ENCODE measurements at regions of chr3 and their contacts with region 1.

Region 1: GRCh38 chr3:153970741-153971347 is 150.3 kb upstream of the ARHGEF26 start:
- DNase-seq: peak; percentile 64
- H3K4me3 ChIP-seq: no peak overlapping the region
- H3K27ac ChIP-seq: no peak overlapping the region
- H3K4me1 ChIP-seq: no peaks in the 10 kb centered on the region
- H3K27me3 ChIP-seq: no peaks in the 10 kb centered on the region
- CTCF ChIP-seq: peak; percentile 23 to 33
- POLR2A ChIP-seq: no peak

Region 2: GRCh38 chr3:153443961-153444360 is 526.9 kb before region 1 on chr3:
- CTCF ChIA-PET with region 1: interaction called, 13 read pairs
- POLR2A ChIA-PET with region 1: no interaction called
- dilution Hi-C with region 1: no loop called
- intact Hi-C with region 1: no loop called
- DNase-seq: peak; percentile 18
- H3K4me3 ChIP-seq: no peak overlapping the region
- H3K27ac ChIP-seq: no peak overlapping the region
- H3K4me1 ChIP-seq: no peaks in the 10 kb centered on the region
- H3K27me3 ChIP-seq: no peaks in the 10 kb centered on the region
- CTCF ChIP-seq: peak; percentile 1 to 6
- POLR2A ChIP-seq: no peak

Region 3: DNA sequence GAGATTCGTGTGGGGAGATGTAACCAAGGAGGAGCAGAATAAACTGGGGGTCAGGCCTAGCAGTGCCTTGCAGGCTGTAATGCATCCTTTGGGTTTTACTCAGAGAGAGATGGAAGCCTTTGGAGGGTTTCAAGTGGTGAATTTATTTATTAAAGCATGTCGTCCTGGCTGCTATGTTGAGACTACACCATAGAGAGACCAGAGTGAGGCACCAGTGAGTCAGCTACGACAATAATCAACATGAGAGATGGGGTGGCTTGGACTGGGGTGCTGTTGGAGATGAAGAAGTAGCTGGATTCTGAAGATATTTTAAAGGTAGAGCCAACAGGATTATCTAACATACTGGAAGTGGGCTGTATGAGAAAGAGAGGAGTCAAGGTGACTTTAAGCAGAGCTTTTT is 184.9 kb before region 1 on chr3:
- CTCF ChIA-PET with region 1: interaction called, 23 read pairs
- POLR2A ChIA-PET with region 1: no interaction called
- dilution Hi-C with region 1: no loop called
- intact Hi-C with region 1: no loop called
- DNase-seq: no peak
- H3K4me3 ChIP-seq: no peak overlapping the region
- H3K27ac ChIP-seq: no peak overlapping the region
- H3K4me1 ChIP-seq: no peaks in the 10 kb centered on the region
- H3K27me3 ChIP-seq: no peaks in the 10 kb centered on the region
- CTCF ChIP-seq: no peak
- POLR2A ChIP-seq: no peak

Region 4: GRCh38 chr3:153952091-153952490 is 18.8 kb before region 1 on chr3:
- CTCF ChIA-PET with region 1: interaction called, 12 read pairs
- POLR2A ChIA-PET with region 1: no interaction called
- dilution Hi-C with region 1: no loop called
- intact Hi-C with region 1: no loop called
- DNase-seq: no peak
- H3K4me3 ChIP-seq: no peak overlapping the region
- H3K27ac ChIP-seq: no peak overlapping the region
- H3K4me1 ChIP-seq: no peaks in the 10 kb centered on the region
- H3K27me3 ChIP-seq: peaks cover 0 to 2% of the 10 kb centered on the region in 2 experiments
- CTCF ChIP-seq: no peak
- POLR2A ChIP-seq: no peak

Region 5: DNA sequence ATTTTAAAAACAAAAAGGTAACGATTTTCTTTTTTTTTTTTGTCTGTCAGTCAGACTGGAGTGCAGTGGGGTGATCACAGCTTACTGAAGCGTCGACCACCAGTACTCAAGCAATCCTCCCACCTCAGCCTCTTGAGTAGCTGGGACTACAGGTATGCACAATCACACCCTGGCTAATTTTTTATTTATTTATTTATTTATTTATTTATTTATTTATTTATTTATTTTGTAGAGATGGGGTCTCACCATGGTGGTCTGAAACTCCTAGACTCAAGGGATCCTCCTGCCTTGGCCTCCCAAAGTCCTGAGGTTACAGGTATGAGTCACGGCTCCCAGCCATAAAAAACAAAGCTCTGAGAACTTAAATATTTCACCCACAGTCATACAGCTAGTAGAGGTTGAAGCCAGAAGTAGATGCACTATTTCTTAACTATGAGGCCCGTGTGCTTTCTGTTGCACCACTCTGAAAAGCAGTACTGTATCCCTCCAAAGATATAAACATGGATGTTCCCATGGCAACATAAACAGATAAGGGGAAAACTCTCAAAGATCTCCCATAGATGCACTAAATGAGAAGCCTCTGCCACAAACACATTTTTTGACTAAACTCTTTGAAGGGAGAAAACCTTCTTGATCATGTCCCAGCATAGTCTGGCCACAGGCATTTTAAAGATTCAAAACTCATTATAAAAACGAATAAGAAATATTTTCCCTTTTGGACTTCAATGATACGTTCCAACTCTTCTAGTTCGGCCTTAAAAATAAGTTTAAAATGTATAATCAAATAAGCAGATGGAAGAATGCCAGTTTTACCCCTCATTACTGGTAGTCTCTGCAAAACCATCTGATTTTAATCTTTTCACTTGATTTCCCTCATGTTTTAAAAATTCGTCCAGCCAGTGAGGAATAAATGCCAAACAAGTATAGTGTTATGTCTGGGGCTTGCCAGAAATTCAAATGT is 11.9 kb before region 1 on chr3:
- CTCF ChIA-PET with region 1: interaction called, 12 read pairs
- POLR2A ChIA-PET with region 1: no interaction called
- dilution Hi-C with region 1: no loop called
- intact Hi-C with region 1: no loop called
- DNase-seq: no peak
- H3K4me3 ChIP-seq: no peak overlapping the region
- H3K27ac ChIP-seq: no peak overlapping the region
- H3K4me1 ChIP-seq: no peaks in the 10 kb centered on the region
- H3K27me3 ChIP-seq: no peaks in the 10 kb centered on the region
- CTCF ChIP-seq: no peak
- POLR2A ChIP-seq: no peak

Region 6: GRCh38 chr3:154132777-154133375 is 162.0 kb after region 1 on chr3:
- CTCF ChIA-PET with region 1: no interaction called
- POLR2A ChIA-PET with region 1: no interaction called
- dilution Hi-C with region 1: no loop called
- intact Hi-C with region 1: no loop called
- DNase-seq: no peak
- H3K4me3 ChIP-seq: no peak overlapping the region
- H3K27ac ChIP-seq: no peak overlapping the region
- H3K4me1 ChIP-seq: no peaks in the 10 kb centered on the region
- H3K27me3 ChIP-seq: no peaks in the 10 kb centered on the region
- CTCF ChIP-seq: no peak
- POLR2A ChIP-seq: no peak

Measured in endothelial cell of umbilical vein (primary cell).